Right cardiac atrium (tissue), 5 donors: ENCODE measurements at regions of chr10 and their contacts with region 1.

Region 1: GRCh38 chr10:110129490-110129889 is 77.9 kb upstream of the MXI1 start:
- DNase-seq: no peak
- ATAC-seq: no peak
- H3K4me3 ChIP-seq: no peak overlapping the region
- H3K27ac ChIP-seq: no peak overlapping the region
- H3K4me1 ChIP-seq: no peaks in the 10 kb centered on the region
- H3K27me3 ChIP-seq: no peaks in the 10 kb centered on the region

Region 2: GRCh38 chr10:109894516-109894915 is 235.0 kb before region 1 on chr10:
- intact Hi-C with region 1: loop called in 3 of 4 experiments (anchors 10 kb)
- DNase-seq: peak; percentile 85 to 92 (median 89)
- ATAC-seq: peak; percentile 75 to 86
- H3K4me3 ChIP-seq: no peak overlapping the region
- H3K27ac ChIP-seq: peak overlapping the region; percentile 95
- H3K4me1 ChIP-seq: peaks cover 49% of the 10 kb centered on the region
- H3K27me3 ChIP-seq: no peaks in the 10 kb centered on the region

Region 3: GRCh38 chr10:110007701-110008517 is 121.6 kb before region 1 on chr10 and contains the start of gene ADD3:
- intact Hi-C with region 1: no loop called
- DNase-seq: peak; percentile 97 to 99 (median 99)
- ATAC-seq: peak; percentile 95
- H3K4me3 ChIP-seq: peak within 1 kb of the TSS; percentile 98
- H3K27ac ChIP-seq: peak within 1 kb of the TSS; percentile 92
- H3K4me1 ChIP-seq: peaks cover 2% of the 10 kb centered on the region
- H3K27me3 ChIP-seq: no peaks in the 10 kb centered on the region
- total RNA-seq, gene ADD3: 113 to 146 (median 124) TPM

Region 4: DNA sequence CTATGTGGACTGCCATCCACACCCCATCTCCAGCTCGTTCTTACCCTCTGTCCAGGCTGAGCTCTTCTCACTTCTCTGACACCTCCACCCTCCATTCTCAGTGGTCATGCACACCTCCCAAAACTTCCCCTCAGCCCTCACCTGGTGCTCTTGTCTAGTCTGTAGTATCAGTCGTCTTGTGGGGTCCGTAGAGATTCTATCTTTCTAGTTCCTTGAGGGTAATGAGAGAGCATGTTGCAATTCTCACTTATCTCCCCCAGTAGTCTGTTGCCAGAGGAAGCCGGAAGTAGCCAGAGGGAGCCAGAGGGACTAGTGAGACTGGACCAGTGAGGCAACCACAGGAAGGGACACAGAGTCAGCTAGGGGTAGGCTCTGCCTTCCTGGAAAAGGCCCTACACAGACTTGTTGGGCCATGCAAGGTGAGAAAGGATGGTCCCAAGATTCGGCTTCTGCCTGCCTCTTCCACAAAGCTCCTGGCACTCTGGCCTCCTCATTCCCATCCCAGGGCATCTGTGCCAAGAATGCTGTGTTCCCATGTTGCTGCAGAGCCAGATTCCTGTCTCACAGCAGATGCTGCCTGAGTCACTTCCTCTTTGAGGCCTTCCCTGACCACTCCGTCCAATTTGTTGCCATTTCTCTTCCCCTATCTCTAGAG is 317.6 kb after region 1 on chr10:
- intact Hi-C with region 1: no loop called
- DNase-seq: no peak
- ATAC-seq: peak; percentile 53 to 69
- H3K4me3 ChIP-seq: no peak overlapping the region
- H3K27ac ChIP-seq: no peak overlapping the region
- H3K4me1 ChIP-seq: peaks cover 8% of the 10 kb centered on the region
- H3K27me3 ChIP-seq: no peaks in the 10 kb centered on the region